ENCODE measurements at regions of chr5 and their contacts with region 1.

Region 1: DNA sequence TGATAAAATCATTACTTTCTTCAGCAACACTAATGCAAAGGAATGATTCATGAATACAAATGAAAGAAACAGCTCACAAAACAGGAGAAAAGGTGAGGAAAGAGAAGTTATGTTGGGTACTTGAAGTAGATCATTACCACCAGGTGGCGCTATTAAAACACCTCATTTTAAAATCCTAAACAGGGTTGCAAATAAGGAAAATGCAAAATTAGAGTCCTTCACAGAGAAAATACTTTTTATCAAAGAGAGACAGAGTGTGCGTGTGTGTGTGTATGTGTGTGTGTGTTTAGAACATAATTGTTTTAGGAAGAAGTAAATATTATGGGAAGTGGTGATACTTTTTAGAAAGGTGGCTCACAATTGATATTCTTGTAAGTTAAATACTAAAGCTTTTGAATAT is 49.5 kb upstream of the CD180 start:
- DNase-seq: no peak
- ATAC-seq: peak; percentile 56

Region 2: DNA sequence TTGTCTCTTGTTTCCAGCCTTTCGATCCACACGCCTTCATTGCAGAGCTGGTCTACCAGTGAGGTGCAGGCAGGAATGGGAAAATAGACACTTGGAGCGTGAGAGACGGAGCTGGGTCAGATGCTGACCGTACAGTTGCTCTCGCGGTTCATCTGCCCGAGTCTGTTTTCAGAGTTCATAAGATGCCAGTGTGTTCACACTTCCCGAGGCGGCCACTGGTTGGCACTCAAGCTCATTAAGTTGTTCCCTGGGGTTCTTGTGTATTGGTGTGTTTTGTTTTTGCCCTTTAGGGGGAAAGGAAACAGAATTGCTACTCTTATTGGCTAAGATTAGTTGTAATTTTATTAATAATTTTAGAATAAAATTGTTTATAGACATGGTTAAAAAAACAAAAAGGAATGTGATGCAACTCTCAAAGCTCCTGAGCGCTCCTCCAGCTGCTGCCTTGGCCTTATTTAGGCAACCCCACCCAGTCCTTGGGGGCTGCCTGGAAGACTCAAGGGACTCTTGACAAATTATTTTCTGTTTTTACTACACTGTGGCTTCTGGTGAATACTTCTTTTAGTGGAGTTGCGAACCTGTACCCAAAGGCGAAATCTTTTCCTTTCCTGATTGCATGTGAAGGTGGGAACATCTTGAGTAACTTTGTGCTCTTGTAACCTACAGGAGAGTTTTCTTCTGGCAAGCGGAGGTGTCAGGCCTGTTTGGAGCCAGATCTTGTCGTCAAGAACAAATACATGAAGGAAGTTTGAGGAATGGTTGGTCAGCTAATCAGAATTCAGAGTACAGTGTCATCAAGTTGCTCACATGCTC is 503.8 kb before region 1 on chr5:
- intact Hi-C with region 1: no loop called
- DNase-seq: peak; percentile 79
- ATAC-seq: peak; percentile 74

Region 3: GRCh38 chr5:67809589-67809988 is 563.5 kb after region 1 on chr5:
- intact Hi-C with region 1: loop called (anchors 5 kb)
- DNase-seq: no peak
- ATAC-seq: no peak

Region 4: DNA sequence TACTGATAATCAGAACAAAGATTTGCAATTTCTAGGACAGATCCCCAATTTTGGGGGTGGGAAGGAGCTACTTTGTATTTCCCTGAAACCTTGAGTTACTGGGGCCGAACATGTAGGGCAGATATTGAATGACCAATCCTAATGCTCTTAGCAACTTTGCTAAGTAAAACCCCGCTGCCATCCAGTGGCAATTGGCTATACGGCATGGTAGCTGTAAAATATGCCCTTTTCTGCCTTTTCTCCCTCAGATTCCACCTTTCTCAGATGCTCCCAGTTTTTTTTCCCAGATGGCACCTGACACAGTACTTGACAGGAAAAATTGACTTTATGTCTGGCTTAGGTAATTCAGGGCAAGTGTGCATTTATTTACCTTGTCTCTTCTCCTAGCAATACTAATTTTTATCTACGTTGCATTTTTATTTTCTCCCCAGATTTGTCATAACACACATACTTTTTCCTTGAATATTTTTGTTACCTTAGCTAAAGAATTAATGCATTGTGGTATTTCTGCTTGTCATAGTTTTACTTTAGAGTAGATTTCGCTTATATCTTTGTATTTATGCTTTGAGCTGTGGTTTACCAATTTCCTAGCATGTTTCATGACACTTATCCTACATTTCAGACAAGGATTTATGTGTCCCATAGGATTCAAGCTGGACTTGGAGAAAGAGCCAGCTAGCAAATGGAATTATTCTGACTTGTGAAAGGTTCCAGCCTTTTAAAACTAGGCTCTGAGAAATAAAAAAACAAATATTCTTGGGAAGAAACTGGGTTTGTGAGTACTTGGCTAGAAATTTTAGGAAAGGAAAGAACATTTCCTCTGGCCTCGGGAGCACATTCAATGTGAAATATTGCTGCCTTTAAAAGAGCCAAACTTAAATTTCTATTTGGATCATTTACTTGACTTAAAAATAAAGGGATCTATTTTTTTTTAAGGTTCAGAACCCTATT is 1006.8 kb after region 1 on chr5:
- intact Hi-C with region 1: loop called (anchors 5 kb)
- DNase-seq: no peak
- ATAC-seq: peak; percentile 59

Region 5: DNA sequence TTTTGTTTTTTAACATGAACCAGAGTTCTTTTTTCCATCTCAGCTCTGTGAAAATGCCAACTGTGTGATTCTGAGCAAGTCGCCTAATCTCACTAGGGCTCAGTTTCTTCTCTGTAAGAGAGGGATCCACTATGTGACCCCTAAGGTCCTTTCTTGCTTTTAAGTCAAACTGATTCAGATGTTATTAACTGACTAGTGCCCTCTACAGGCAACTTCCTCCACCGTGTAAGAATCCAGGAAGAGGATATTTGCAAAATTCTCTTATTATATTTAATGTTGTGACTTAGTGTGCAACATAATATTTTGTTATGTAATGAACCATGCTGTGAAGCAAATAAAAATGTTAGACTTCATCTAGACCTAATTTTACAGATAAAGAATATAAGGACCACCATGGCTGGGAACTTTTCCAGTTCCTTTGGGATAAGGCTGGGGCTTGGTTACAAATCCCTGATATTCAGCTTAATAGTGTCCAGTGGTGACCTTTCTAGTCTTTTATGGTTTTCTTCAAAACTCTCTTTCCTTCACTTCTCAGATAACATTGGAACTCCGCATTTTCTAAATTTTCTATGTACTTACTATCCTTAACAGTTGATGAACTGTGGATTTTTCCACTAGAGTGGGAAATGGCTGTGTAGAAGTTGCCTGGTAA is 1214.2 kb after region 1 on chr5:
- intact Hi-C with region 1: loop called (anchors 5 kb)
- DNase-seq: no peak
- ATAC-seq: peak; percentile 61

Measured in Right ventricle myocardium inferior (tissue), 1 donor.